K562 (cell line): ENCODE measurements at regions of chr18 and their contacts with region 1.

Region 1: DNA sequence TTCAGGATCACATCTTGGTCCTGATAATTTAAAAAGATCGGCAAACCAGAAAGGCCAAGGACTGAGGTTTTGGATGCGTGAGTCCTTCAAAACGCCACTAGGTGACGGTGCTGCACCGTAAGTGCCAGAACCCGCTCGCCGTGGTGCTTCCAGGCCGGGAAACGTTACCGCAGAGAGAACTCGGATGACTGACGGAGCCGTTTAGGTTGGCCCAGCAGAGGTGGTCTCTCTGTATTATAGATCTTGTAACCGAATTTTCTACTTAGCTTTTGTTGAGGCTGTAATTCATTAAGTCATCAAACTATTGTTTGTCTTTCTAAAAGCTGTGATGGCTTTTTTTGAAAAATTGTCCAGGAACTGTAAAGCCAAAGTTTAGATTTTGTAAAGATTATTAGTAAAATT is 39.8 kb upstream of the ADCYAP1 start:
- DNase-seq: peak; percentile 73 to 92 (median 78)
- ATAC-seq: peak; percentile 98
- H3K4me3 ChIP-seq: no peak overlapping the region
- H3K27ac ChIP-seq: no peak overlapping the region
- H3K4me1 ChIP-seq: 0 out of 5 replicates have a peak, but pooled peaks cover 0 to 3% of the 10 kb centered on the region in 2 experiments
- H3K27me3 ChIP-seq: peaks cover 8 to 17% of the 10 kb centered on the region in 2 experiments
- CTCF ChIP-seq: peak; percentile 97 to 99 (median 99)
- EP300 ChIP-seq: peak; percentile 13; the same call in 1 of the 2 replicates
- POLR2A ChIP-seq: no peak
- RAD21 ChIP-seq: peak; percentile 100

Region 2: DNA sequence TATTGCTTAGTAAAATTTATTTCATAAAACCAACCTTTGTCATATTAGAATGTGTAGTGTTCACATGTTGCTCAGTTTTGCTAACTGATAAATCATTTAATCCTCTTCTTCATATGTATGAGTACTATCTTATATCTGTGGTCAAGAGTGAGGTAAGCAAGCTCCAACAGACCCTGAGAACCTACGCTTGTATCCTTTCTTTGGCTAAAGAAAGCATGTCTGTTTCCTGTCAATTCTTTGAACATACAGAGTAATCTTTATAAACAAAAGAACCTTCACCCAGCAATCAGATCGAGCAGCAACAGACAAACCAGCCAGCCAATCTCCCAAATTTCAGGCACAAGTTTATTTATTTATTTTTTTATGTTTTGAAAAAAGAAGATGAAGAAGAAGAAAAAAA is 46.2 kb after region 1 on chr18:
- CTCF ChIA-PET with region 1: no interaction called
- POLR2A ChIA-PET with region 1: no interaction called
- in situ Hi-C with region 1: no loop called
- intact Hi-C with region 1: loop called (anchors 5 kb)
- DNase-seq: no peak
- ATAC-seq: no peak
- H3K4me3 ChIP-seq: no peak overlapping the region
- H3K27ac ChIP-seq: no peak overlapping the region
- H3K4me1 ChIP-seq: peaks cover 0 to 30% of the 10 kb centered on the region in 2 experiments; a peak in 3 of 5 replicates
- H3K27me3 ChIP-seq: peaks cover 34 to 48% of the 10 kb centered on the region in 2 experiments; a peak in 4 of 5 replicates
- CTCF ChIP-seq: no peak
- EP300 ChIP-seq: no peak
- POLR2A ChIP-seq: no peak
- RAD21 ChIP-seq: no peak

Region 3: DNA sequence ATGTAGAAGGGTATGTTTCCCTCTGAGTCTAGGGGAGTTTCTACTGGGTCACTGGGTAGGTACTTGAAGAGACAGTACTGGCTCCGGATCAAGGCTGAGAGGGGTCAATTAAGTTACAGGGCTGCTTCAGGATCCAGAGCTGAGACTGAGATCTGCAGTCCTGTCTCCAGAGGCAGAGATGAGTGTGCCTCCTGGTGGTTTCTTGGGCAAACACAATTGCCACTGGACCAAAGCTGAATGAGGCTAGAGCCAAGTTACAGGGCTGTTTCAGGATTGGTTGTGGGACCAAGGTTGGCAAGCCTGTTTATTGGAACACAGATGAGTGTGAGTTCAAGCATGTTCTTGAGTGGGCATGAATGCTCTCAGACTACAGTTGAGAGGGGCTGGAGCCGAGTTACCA is 197.7 kb after region 1 on chr18:
- CTCF ChIA-PET with region 1: interaction called, 7 read pairs
- POLR2A ChIA-PET with region 1: no interaction called
- in situ Hi-C with region 1: loop called (anchors 10 kb)
- intact Hi-C with region 1: loop called (anchors 1 kb)
- DNase-seq: peak in 2 of 4 experiments; percentile 37 to 52
- ATAC-seq: peak; percentile 88
- H3K4me3 ChIP-seq: no peak overlapping the region
- H3K27ac ChIP-seq: no peak overlapping the region
- H3K4me1 ChIP-seq: no peaks in the 10 kb centered on the region
- H3K27me3 ChIP-seq: peaks cover 0 to 6% of the 10 kb centered on the region in 2 experiments; a peak in 1 of 5 replicates
- CTCF ChIP-seq: peak; percentile 61 to 86 (median 74); a peak in 5 of 6 replicates
- EP300 ChIP-seq: peak; percentile 27; the same call in 1 of the 2 replicates
- POLR2A ChIP-seq: no peak
- RAD21 ChIP-seq: peak; percentile 80 to 94

Region 4: GRCh38 chr18:1663879-1664705 is 799.2 kb after region 1 on chr18:
- CTCF ChIA-PET with region 1: interaction called, 4 read pairs
- POLR2A ChIA-PET with region 1: no interaction called
- in situ Hi-C with region 1: no loop called
- intact Hi-C with region 1: loop called (anchors 10 kb)
- DNase-seq: peak; percentile 35 to 77 (median 48)
- ATAC-seq: peak; percentile 97
- H3K4me3 ChIP-seq: no peak overlapping the region
- H3K27ac ChIP-seq: no peak overlapping the region
- H3K4me1 ChIP-seq: no peaks in the 10 kb centered on the region
- H3K27me3 ChIP-seq: no peaks in the 10 kb centered on the region
- CTCF ChIP-seq: peak; percentile 93 to 98 (median 96)
- EP300 ChIP-seq: no peak
- POLR2A ChIP-seq: no peak
- RAD21 ChIP-seq: peak; percentile 81 to 83

Region 5: GRCh38 chr18:2547477-2548087 is 1682.7 kb after region 1 on chr18:
- CTCF ChIA-PET with region 1: interaction called, 10 read pairs
- POLR2A ChIA-PET with region 1: no interaction called
- in situ Hi-C with region 1: loop called (anchors 5 kb)
- intact Hi-C with region 1: loop called (anchors 5 kb)
- DNase-seq: peak; percentile 33 to 69 (median 55)
- ATAC-seq: peak; percentile 84
- H3K4me3 ChIP-seq: no peak overlapping the region
- H3K27ac ChIP-seq: no peak overlapping the region
- H3K4me1 ChIP-seq: no peaks in the 10 kb centered on the region
- H3K27me3 ChIP-seq: no peaks in the 10 kb centered on the region
- CTCF ChIP-seq: peak; percentile 38 to 82 (median 53); a peak in 4 of 6 replicates
- EP300 ChIP-seq: no peak
- POLR2A ChIP-seq: no peak
- RAD21 ChIP-seq: peak; percentile 83 to 84